Cardiac septum (tissue), 1 donor: ENCODE measurements at regions of chr10 and their contacts with region 1.

Region 1: DNA sequence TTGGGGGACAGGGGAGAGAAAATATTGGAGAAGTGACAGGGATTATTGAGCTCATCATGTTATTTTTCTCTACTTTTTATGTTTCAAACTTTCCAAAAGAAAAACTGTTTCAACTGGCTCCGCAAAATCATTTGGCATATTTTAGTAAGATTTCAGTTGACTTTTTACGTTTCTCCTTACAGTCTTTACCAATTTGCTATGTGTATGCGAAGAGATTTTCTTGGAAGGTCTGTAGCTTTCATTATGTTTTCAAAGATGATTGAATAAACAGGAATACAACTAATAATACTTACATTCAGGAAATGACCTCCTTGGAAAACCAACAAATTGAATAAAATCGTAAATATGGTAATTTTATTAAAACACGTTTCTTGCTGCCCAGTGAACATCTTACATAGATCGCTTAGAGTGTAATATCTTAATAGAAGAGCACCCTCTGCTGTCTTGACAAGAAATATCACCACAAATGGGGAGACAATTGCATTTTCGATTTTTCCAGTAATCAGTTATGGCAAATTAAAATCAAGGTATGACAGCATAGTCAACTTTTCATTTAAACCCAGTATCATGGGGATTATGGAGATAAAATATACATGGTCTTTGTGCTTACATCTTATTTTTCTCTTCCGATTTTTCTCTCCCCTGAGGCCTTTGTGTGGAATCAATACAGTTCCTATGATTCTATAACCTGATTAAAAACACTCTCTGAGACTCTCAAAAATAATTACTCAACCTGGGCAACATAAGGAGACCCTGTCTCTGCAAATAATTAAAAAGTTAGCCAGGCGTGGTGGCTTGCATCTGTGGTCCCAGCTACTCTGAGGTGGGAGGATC is 43.1 kb downstream of the MBL2 start:
- DNase-seq: no peak

Region 2: GRCh38 chr10:52644373-52645186 is 84.9 kb before region 1 on chr10:
- intact Hi-C with region 1: loop called (anchors 2 kb)
- DNase-seq: no peak